ENCODE measurements at regions of chr6 and their contacts with region 1.

Region 1: GRCh38 chr6:149316798-149317655 is 485 bp upstream of the TAB2 start:
- DNase-seq: peak; percentile 91
- H3K4me3 Mint-ChIP-seq: peak overlapping the region; percentile 81
- H3K27ac Mint-ChIP-seq: peak overlapping the region; percentile 94
- H3K4me1 Mint-ChIP-seq: peaks cover 39% of the 10 kb centered on the region
- H3K27me3 Mint-ChIP-seq: no peaks in the 10 kb centered on the region

Region 2: DNA sequence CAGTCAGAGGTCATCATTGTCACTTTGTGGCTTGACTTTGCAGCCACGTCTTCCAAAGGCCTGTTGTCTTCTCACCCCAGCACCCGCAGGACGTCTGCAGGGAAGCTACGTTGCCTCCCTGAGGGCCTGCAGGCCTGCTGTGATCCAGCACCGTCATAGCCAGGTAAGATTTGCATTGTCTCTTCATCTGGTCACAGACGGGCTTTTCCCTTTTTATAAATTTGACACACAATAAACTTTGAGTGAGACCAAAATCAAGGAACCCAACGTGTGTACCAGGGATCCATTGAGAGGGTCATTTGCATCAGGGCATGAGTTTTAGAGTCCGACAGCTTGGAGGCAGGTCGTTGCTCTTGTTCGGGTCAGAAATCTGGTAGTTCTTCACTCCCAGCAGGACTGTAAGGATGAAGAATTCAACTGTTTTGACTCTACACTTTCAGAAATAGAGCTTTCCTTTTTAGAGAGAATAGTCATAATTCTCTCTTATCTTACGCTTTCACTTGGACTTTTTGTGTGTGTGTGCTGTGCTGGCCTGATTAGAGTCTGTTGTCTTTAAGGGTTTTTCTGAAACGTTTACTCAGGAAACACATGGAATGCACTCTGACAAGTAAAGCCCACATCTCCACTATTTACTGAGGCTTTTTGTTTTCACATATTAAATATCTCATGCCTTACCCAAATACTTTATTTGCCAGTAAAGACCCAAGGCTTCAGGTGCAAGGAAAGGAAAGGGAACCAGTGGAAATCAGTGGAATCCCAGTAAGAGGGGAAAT is 176.7 kb before region 1 on chr6:
- CTCF ChIA-PET with region 1: no interaction called
- intact Hi-C with region 1: loop called (anchors 1 kb)
- DNase-seq: peak; percentile 87
- H3K4me3 Mint-ChIP-seq: peak overlapping the region; percentile 66
- H3K27ac Mint-ChIP-seq: peak overlapping the region; percentile 94
- H3K4me1 Mint-ChIP-seq: peaks cover 42% of the 10 kb centered on the region
- H3K27me3 Mint-ChIP-seq: no peaks in the 10 kb centered on the region

Region 3: DNA sequence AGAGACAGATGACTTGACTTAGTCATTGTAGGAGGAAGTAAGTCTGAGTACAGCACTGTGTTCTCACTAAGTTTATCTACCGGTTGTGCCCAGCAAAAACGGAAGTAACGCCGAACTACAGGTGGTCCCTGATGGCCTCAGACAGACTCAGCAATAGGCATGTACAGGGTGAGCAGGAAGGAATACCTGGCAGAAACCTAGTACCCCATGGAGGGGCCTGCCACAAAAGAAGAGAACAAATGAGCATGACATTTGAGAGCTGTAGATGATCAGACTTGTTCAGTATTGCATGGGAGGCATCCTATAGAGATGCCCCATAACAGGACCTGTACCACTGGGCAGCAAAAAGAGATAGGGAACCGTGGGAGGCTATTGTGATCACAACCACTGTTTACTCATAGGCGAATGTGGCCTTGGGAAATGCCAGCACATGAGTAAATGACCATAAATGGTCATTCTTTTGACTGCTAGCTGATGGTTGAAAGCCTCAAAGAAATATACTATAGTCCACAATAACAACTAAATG is 105.9 kb before region 1 on chr6:
- CTCF ChIA-PET with region 1: interaction called, 3 read pairs
- intact Hi-C with region 1: loop called (anchors 1 kb)
- DNase-seq: peak; percentile 57
- H3K4me3 Mint-ChIP-seq: no peak overlapping the region
- H3K27ac Mint-ChIP-seq: peak overlapping the region; percentile 77
- H3K4me1 Mint-ChIP-seq: peaks cover 19% of the 10 kb centered on the region
- H3K27me3 Mint-ChIP-seq: no peaks in the 10 kb centered on the region

Region 4: DNA sequence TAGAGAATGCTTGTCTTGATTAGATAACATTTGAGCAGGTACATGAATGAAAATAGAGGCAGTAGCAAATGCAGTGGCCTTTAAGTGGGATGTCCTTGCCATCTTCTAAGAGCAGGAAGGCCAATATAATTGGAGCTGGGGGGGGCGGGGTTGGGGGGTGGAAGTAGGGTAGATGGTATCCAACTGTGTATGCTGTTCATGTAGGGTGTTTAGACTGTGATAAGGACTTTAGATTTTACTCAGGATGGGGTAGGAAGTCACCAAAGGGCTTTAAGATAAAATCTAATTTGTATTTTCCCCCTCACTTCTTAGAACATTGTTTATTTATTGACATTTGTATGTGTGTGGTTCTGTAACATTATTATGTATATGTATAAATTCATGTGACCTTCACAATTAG is 12.5 kb after region 1 on chr6:
- CTCF ChIA-PET with region 1: interaction called, 4 read pairs
- intact Hi-C with region 1: loop called (anchors 1 kb)
- DNase-seq: no peak
- H3K4me3 Mint-ChIP-seq: no peak overlapping the region
- H3K27ac Mint-ChIP-seq: peak overlapping the region; percentile 68
- H3K4me1 Mint-ChIP-seq: peaks cover 87% of the 10 kb centered on the region
- H3K27me3 Mint-ChIP-seq: no peaks in the 10 kb centered on the region

Region 5: DNA sequence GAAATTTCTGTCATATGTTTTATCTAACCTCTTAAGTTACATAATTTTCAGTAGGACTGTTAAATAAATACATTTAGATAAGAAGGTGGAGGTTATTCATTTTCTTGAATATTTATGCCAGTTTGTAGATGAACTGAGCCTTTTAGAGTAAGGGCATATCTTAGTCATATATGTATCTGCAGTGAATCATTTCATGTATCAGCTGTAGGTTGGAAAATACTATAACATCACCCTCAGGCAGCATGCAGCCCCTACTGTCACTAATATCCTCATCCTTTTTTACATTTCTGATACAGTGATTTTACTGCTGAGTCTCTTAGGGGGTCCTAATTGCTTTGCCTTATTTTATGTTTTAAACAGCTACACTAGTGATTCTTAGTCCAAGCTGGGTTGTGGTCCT is 63.5 kb after region 1 on chr6:
- CTCF ChIA-PET with region 1: no interaction called
- intact Hi-C with region 1: loop called (anchors 1 kb)
- DNase-seq: peak; percentile 35
- H3K4me3 Mint-ChIP-seq: no peak overlapping the region
- H3K27ac Mint-ChIP-seq: no peak overlapping the region
- H3K4me1 Mint-ChIP-seq: peaks cover 63% of the 10 kb centered on the region
- H3K27me3 Mint-ChIP-seq: no peaks in the 10 kb centered on the region

Region 6: GRCh38 chr6:149513915-149514314 is 196.9 kb after region 1 on chr6:
- CTCF ChIA-PET with region 1: no interaction called
- intact Hi-C with region 1: loop called (anchors 2 kb)
- DNase-seq: no peak
- H3K4me3 Mint-ChIP-seq: no peak overlapping the region
- H3K27ac Mint-ChIP-seq: peak overlapping the region; percentile 4
- H3K4me1 Mint-ChIP-seq: peaks cover 50% of the 10 kb centered on the region
- H3K27me3 Mint-ChIP-seq: no peaks in the 10 kb centered on the region